Activated CD4-positive, alpha-beta T cell treated with anti-CD3 and anti-CD28 coated beads, Interleukin-2, amount 10 ng/mL, durations not matched to agents 24 days and 14 days (primary cell): ENCODE measurements at regions of chr9 and their contacts with region 1.

Region 1: GRCh38 chr9:120842690-120843499 is at the start of gene PSMD5:
- DNase-seq: peak; percentile 99
- H3K4me3 Mint-ChIP-seq: peak within 1 kb of the TSS; percentile 97
- H3K27ac Mint-ChIP-seq: peak within 1 kb of the TSS; percentile 96
- H3K4me1 Mint-ChIP-seq: peaks cover 67% of the 10 kb centered on the region
- H3K27me3 Mint-ChIP-seq: no peaks in the 10 kb centered on the region
- total RNA-seq, gene PSMD5: 58.1 and 63.7 TPM in 2 replicates

Region 2: DNA sequence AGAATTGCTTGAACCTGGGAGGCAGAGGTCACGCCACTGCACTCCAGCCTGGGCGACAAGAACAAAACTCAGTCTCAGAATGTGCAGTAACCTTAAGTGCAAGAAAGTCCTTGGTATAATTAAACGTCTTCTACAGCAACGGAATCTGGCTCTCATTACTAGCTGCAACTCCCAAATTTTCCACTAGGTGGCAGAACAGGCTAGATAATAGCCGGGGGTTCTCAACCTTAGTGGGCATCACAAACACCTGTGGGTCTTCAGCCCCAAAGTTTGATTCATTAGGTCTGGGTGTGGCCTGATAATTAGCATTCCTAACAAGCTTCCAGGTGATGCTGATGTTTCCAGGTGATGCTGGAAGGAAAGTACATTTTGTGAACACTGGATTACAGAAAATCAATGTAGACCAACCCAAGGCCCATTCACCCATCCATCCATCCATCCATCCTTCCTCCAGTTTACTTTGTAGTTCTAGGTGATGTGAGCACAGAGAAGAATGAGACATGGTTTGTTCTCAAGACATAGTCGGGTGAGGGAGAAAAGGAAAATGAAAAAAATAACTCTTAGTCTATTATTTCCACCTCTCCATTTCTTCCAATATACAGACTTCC is 87.0 kb before region 1 on chr9:
- intact Hi-C with region 1: loop called (anchors 5 kb)
- DNase-seq: peak; percentile 93
- H3K4me3 Mint-ChIP-seq: no peak overlapping the region
- H3K27ac Mint-ChIP-seq: peak overlapping the region; percentile 48
- H3K4me1 Mint-ChIP-seq: peaks cover 15% of the 10 kb centered on the region
- H3K27me3 Mint-ChIP-seq: no peaks in the 10 kb centered on the region

Region 3: DNA sequence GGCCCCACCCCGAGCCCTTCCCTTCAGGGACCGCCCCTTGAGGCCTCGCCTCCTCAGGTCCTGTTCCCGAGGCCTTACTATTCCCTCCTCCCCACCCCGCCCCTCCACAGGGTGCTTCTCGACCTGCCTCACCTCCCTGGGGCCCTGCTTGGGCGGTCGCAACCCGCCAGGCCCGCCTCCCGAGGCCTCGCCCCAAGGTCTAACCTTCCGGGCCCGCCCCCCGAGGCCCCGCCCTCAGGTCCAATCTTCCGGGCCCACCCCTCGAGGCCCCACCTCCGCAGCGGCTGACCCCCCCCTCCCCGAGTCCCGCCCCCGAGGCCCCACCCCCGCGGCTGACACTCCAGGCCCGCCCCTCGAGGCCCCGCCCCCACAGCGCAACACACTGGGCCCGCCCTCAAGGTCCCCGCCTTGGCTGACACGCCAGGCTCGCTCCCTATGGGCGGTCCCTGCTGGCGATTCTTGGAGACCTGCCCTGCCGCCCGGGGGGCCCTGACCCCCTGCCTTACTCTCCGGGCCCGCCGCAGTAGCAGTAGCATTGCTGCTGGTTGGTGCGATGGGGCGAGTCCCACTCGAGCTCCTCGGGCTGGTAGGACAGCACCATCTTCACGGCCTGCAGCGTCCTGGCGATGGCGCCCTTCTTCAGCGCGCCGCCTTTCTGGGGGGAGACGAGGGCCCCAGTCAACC is 25.9 kb after region 1 on chr9:
- intact Hi-C with region 1: loop called (anchors 1 kb)
- DNase-seq: peak; percentile 98
- H3K4me3 Mint-ChIP-seq: peak overlapping the region; percentile 90
- H3K27ac Mint-ChIP-seq: peak overlapping the region; percentile 95
- H3K4me1 Mint-ChIP-seq: peaks cover 40% of the 10 kb centered on the region
- H3K27me3 Mint-ChIP-seq: no peaks in the 10 kb centered on the region

Region 4: DNA sequence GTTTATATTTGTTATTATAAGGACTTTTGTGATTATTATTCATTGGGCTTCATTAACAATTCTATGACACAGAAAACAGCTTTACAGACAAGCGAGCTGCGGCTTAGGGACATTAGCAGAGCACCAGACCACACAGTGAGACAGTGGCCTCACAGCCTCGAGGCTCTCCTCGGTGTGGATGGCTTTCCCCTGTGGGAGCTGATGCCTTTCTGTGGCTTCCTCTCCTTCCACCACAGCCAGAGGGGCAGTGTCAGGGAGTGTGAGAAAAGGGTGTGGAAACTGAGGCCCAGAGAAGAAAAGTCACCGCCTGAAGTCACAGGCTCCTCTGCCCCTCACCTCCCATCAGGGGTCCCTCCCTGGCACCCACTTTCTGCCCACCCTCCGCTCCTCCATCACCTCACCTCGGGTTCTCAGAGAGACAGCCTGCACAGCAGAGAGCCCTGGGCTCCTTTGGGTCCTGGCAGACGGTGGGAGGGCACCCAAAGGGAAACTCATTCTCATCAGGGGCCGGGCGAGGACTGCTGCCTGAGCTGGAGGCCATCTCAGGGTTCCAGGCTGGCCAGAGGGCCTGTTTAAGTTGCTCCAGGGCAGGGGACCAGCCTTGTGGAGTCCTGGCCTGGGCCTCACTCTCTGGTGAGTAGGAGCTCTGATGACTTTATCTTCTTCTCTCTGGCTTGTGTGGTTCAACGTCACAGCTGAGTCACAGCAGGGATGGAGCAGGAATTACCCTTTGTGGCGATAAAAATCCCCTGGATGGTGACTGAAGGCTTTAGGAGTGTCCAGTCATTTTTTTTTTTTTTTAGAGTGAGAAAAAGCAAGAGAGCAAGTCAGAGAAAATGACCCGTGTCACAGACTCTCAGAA is 82.9 kb after region 1 on chr9:
- intact Hi-C with region 1: loop called (anchors 1 kb)
- DNase-seq: peak; percentile 92
- H3K4me3 Mint-ChIP-seq: peak overlapping the region; percentile 93
- H3K27ac Mint-ChIP-seq: peak overlapping the region; percentile 96
- H3K4me1 Mint-ChIP-seq: peaks cover 77% of the 10 kb centered on the region
- H3K27me3 Mint-ChIP-seq: no peaks in the 10 kb centered on the region

Region 5: GRCh38 chr9:121121582-121122087 is 278.7 kb after region 1 on chr9:
- intact Hi-C with region 1: loop called (anchors 2 kb)
- DNase-seq: peak; percentile 99
- H3K4me3 Mint-ChIP-seq: peak overlapping the region; percentile 87
- H3K27ac Mint-ChIP-seq: peak overlapping the region; percentile 89
- H3K4me1 Mint-ChIP-seq: peaks cover 40% of the 10 kb centered on the region
- H3K27me3 Mint-ChIP-seq: no peaks in the 10 kb centered on the region